ENCODE measurements at regions of chr1 and their contacts with region 1.

Region 1: DNA sequence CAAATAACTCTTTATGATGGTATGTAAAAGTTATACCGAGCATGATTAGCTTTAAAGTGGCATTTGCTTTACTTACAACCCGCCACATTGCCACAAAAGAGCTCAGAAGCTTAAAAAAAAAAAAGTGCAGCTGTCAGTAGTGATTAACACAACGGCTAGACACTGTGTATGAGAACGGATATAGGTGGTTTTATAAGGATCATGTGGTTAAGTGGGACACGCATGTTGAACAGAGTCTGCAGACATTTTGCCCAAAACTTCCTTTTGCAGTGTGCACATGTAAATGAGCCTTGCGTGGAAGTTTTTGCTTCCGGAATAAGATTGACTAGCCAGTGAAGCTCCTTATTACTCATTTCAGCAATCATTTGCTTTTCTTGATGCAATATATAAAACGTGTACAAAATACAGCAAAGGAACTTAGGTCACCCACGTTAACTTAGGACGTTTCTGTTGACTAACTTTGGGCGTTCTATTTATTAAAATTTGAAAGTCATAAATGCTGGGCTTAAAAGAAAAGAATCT is 58.7 kb upstream of the RGS1 start:
- DNase-seq: peak; percentile 67
- H3K4me3 Mint-ChIP-seq: peak overlapping the region; percentile 79
- H3K27ac Mint-ChIP-seq: peak overlapping the region; percentile 92
- H3K4me1 Mint-ChIP-seq: peaks cover 58% of the 10 kb centered on the region
- H3K27me3 Mint-ChIP-seq: peaks cover 4% of the 10 kb centered on the region

Region 2: DNA sequence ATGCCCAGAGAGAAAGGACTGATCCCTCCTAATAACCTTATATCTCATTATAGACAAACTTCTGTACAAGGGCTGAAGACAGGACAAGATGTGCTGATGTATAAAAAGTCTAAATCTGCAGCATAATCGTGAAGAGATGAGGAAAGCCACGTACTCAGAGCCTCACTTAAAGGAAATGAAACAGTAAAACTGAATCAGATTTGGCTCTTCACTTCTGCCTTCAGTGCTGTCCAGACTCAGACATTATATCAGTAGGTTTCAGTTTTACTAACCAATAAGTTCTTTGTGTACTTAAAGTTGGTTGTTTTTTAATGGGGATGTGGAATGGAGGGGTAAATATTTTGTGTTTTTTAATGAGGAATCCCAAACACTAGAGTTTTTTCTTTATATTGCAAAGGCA is 13.4 kb after region 1 on chr1:
- intact Hi-C with region 1: loop called (anchors 1 kb)
- DNase-seq: no peak
- H3K4me3 Mint-ChIP-seq: no peak overlapping the region
- H3K27ac Mint-ChIP-seq: peak overlapping the region; percentile 49
- H3K4me1 Mint-ChIP-seq: peaks cover 32% of the 10 kb centered on the region
- H3K27me3 Mint-ChIP-seq: peaks cover 4% of the 10 kb centered on the region

Region 3: DNA sequence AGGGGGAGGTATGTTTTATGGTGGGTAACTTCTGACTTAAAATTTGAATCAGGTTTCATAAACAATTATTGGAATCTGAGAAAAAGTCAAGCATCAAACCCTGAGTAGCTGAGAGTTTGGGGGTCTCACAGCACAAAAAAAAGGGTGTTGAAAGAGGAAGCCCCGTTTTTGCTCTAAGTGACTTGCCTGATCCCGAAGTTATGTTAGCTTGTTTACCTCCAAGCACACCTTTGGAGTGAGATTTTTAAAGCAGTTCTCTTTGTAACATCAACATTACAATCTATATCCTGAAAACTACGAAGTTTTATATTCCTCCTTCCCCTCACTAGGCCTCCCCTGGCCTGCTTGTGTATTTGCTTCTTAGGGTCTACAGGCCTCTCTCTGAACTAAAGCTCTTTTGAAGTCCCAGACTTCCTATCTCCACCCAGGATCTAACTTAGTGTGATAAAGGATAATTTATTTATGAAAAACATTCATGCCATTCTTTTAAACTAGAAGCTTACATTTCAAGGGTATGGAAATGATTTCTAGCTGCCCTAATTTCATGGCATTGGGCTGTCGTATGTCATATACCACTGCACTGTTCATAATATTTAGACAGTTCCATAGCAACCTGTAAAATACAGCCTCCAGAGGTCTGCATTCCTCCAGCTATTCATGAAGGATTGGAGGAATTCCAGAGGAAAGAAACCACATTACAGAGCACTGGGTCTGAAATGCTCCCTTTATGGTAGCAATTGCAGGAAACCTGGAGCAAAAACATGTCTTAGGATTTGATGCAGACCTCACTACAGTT is 22.7 kb after region 1 on chr1:
- intact Hi-C with region 1: loop called (anchors 1 kb)
- DNase-seq: no peak
- H3K4me3 Mint-ChIP-seq: peak overlapping the region; percentile 66
- H3K27ac Mint-ChIP-seq: peak overlapping the region; percentile 90
- H3K4me1 Mint-ChIP-seq: peaks cover 73% of the 10 kb centered on the region
- H3K27me3 Mint-ChIP-seq: no peaks in the 10 kb centered on the region

Region 4: DNA sequence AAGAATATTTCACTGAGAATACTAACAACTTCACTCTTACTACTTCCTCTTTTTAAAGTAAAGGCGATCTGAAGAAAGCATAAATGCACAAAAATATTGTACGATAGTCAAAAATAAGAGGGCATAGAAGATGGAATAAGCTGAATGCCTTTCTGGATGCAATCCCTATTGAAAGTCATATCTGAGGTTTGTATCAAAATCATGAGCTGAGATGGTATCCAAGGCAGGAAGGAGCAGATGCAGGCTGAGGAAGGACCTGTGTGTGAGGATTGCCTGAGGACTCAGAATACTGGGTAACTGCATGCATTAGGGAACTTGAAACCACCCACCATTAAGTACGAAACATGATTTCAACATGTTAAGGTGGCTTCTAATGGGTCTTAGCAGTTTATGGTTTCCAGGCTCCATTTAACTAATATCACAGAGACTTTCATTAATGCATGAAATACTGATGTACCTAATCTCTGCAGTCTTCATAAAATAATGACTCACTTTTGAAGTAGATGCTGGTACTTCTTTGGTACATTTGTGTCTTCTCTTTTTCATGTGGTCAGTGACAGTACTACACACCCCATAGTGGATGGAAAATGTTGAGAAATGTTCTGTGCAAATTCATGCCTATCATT is 29.2 kb after region 1 on chr1:
- intact Hi-C with region 1: loop called (anchors 1 kb)
- DNase-seq: no peak
- H3K4me3 Mint-ChIP-seq: no peak overlapping the region
- H3K27ac Mint-ChIP-seq: peak overlapping the region; percentile 74
- H3K4me1 Mint-ChIP-seq: peaks cover 79% of the 10 kb centered on the region
- H3K27me3 Mint-ChIP-seq: no peaks in the 10 kb centered on the region

Region 5: DNA sequence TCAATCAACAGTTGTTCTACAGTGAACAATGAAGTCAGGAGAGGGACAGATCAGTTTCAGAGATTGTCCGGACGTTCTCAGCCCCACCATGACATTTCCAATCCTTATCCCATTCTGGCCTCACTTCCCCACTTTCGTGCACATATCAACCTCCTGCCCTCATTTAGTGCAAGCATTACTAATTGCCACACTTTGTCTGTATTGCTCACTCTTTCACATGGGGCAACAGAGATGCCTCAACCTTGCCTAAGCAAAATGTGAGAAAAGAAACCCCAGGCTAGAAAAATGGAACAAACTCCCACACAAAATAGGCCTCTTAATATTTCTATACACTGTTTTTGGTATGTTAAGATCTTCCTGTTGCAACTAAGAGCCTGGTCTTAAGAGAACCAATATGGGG is 49.8 kb after region 1 on chr1:
- intact Hi-C with region 1: loop called (anchors 2 kb)
- DNase-seq: no peak
- H3K4me3 Mint-ChIP-seq: no peak overlapping the region
- H3K27ac Mint-ChIP-seq: peak overlapping the region; percentile 13
- H3K4me1 Mint-ChIP-seq: peaks cover 50% of the 10 kb centered on the region
- H3K27me3 Mint-ChIP-seq: no peaks in the 10 kb centered on the region

Region 6: DNA sequence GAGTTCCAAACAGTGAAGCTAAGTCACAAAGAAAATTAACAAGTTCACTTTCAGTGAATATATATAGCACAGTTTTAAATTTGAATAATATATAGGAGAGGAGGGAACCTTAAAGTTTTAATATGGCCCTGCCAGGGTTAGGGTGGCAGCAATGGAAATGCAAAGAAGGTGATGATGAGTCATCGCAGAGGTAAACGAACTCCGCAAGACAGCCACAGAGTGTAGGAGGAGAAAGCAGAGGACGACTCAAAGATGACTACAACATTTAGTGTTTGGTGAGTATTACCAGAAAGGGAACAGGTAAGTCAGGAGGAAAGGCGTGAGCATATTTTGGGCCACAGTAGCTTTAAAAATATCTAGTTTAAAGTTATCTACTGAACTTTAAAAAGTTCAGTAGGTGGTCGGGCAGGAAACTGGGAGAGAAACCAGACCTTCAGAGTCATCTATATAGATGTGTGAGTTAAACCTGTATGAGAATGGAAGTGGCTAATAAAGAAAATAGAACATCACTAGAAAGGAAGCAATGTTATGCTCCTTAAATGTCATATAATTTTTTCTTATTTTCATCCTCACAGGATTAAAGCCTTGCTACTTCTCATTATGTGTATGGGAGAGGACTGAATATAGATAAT is 466.6 kb after region 1 on chr1:
- intact Hi-C with region 1: loop called (anchors 2 kb)
- DNase-seq: no peak
- H3K4me3 Mint-ChIP-seq: peak overlapping the region; percentile 41
- H3K27ac Mint-ChIP-seq: peak overlapping the region; percentile 88
- H3K4me1 Mint-ChIP-seq: peaks cover 56% of the 10 kb centered on the region
- H3K27me3 Mint-ChIP-seq: no peaks in the 10 kb centered on the region

Region 7: DNA sequence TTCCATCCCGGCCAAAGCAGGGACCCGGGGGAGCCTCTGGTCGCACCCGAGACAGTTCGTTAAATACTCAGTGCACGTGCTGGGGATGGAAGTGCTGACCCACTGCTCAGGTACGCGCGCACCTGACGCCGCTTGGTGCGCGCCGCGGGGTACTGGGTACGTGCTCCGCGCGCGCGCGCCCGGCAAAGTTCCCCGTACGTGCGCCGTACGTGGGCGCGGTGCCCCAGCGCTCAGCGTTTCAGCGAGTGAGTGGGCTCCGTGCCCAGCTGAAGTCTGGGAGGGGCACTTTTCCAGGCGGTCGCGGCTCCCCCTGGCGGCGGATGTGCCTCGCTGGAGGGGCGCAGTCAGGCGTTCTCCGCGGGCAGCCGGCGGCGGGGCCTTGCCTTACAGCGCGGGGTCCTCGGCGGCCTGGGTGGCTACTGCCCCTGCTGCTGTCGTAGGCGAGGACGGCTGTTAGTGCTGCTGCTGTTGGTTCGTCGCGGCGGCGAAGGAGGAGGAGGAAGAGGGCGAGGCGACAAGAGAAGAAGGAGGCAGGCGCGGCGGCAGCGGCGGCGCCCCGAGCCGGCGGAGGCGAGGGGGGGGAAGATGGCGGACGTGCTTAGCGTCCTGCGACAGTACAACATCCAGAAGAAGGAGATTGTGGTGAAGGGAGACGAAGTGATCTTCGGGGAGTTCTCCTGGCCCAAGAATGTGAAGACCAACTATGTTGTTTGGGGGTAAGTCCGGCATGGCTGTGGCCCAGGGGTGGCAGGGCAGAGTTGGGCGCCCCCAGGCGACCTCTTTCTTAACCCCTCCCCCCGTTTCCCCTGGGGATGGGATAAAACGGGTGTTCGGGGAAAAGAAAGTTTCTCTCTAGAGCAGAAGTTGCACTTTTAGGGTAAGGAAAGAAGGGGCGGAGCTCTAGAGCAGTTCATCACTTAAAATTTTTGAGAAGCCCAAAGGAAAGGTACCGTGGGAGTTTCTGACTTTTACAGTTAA is 605.1 kb after region 1 on chr1 and contains the start of gene CDC73:
- intact Hi-C with region 1: loop called (anchors 5 kb)
- DNase-seq: peak; percentile 97
- H3K4me3 Mint-ChIP-seq: peak within 1 kb of the TSS; percentile 92
- H3K27ac Mint-ChIP-seq: peak within 1 kb of the TSS; percentile 88
- H3K4me1 Mint-ChIP-seq: peaks cover 62% of the 10 kb centered on the region
- H3K27me3 Mint-ChIP-seq: peaks cover 15% of the 10 kb centered on the region
- total RNA-seq, gene CDC73: 56.1 and 57.3 TPM in 2 replicates

Measured in activated T-helper 1 cell treated with anti-CD3 and anti-CD28 coated beads, Interleukin-12 subunit alpha, Interleukin-12 subunit beta, Interleukin-2, Interleukin-4 antibody, amounts not matched to agents 30 ng/mL and 10 ng/mL and 1 ng/mL, durations not matched to agents 14 hours and 24 hours and 36 hours (primary cell).